Heart right ventricle (tissue), 16 donors: ENCODE measurements at regions of chr14 and their contacts with region 1.

Region 1: DNA sequence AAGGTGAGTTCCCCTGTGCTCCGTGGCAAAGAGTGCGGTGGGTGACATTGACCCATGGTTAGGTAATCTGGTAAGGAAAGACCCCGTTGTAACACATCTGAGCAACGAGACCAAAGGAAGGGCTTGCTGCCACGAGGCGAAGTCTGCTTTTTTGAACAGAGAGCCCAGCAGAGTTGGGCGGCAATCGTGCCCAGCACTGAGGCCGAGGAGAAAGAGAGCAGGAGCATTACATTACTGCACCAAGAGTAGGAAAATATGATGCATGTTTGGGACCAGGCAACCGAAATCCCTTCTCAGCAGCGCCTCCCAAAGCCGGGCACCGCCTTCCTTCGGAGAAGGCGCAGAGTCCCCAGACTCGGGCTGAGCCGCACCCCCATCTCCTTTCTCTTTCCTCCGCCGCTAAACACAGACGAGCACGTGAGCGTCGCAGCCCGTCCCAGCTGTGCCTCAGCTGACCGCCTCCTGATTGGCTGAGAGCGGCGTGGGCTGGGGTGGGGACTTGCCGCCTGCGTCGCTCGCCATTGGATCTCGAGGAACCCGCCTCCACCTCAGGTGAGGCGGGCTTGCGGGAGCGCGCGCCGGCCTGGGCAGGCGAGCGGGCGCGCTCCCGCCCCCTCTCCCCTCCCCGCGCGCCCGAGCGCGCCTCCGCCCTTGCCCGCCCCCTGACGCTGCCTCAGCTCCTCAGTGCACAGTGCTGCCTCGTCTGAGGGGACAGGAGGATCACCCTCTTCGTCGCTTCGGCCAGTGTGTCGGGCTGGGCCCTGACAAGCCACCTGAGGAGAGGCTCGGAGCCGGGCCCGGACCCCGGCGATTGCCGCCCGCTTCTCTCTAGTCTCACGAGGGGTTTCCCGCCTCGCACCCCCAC is at the start of gene HIF1A:
- DNase-seq: peak; percentile 96 to 97
- ATAC-seq: peak; percentile 97 to 99 (median 98)
- H3K4me3 ChIP-seq: peak within 1 kb of the TSS; percentile 70 to 99 (median 88)
- H3K27ac ChIP-seq: peak within 1 kb of the TSS; percentile 72 to 100 (median 96)
- H3K4me1 ChIP-seq: peaks cover 0 to 43% (median 33%) of the 10 kb centered on the region in 9 donors
- H3K27me3 ChIP-seq: no peaks in the 10 kb centered on the region
- CTCF ChIP-seq: peak in 3 of 9 donors; percentile 16 to 24 (median 19)
- total RNA-seq, gene HIF1A: 52.8 to 97.3 (median 62.9) TPM

Region 2: GRCh38 chr14:61525293-61526011 is 169.6 kb before region 1 on chr14:
- intact Hi-C with region 1: loop called in 1 of 10 experiments (anchors 10 kb)
- DNase-seq: peak; percentile 45 to 52
- ATAC-seq: peak; percentile 64 to 91 (median 77)
- H3K4me3 ChIP-seq: no peak overlapping the region
- H3K27ac ChIP-seq: peak overlapping the region; percentile 48 to 92 (median 79)
- H3K4me1 ChIP-seq: peaks cover 15 to 70% (median 52%) of the 10 kb centered on the region in 9 donors
- H3K27me3 ChIP-seq: no peaks in the 10 kb centered on the region
- CTCF ChIP-seq: no peak

Region 3: DNA sequence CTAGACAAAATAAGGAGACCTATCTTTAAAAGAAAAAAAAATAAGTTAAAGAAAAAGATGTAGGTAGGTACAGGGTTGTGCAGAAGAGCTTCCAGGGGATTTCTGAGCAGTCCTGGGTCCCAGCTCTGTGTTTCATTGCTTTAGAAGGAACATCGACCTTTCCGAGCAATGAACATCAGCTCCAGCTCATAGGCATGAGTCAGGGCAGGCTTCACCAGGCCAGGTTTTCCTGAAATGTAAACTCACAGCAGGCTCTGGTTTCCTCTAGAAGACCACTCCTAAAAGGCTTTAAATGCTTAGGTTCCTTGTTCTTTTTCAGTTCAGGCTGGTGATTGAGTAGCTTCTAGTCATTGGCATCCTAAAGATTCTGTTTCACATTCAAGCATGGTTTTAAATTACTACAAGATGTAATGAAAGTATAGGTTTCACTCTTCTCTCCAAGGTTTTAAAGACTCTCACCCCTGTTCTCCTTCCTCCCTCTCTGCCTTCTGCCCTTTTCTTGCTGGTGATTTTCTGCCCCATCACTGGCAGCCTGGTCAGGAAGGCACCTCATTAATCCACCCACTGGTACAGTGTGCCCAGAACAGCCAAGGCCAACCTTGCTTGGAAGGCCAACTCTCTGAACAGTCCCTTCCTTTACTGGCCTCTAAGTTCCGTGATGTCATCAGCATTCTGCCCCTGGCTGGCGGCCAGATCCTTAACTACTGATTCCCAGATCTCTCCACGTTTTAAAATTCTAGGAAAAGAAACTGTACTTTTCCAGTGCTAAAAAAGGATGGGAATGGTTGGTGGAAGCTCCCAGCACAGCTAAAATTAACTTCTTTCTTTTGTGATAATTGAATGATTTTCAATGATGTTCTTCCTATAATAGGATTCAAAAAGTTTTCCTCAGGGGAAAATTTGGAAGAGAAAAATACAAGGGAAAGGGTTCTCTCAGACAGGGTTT is 109.2 kb before region 1 on chr14:
- intact Hi-C with region 1: loop called in 2 of 10 experiments (anchors 5 to 10 kb)
- DNase-seq: peak; percentile 76 to 85
- ATAC-seq: peak; percentile 68 to 92 (median 84)
- H3K4me3 ChIP-seq: no peak overlapping the region
- H3K27ac ChIP-seq: peak overlapping the region; percentile 17 to 86 (median 61)
- H3K4me1 ChIP-seq: peaks cover 6 to 79% (median 42%) of the 10 kb centered on the region in 9 donors
- H3K27me3 ChIP-seq: no peaks in the 10 kb centered on the region
- CTCF ChIP-seq: no peak

Region 4: DNA sequence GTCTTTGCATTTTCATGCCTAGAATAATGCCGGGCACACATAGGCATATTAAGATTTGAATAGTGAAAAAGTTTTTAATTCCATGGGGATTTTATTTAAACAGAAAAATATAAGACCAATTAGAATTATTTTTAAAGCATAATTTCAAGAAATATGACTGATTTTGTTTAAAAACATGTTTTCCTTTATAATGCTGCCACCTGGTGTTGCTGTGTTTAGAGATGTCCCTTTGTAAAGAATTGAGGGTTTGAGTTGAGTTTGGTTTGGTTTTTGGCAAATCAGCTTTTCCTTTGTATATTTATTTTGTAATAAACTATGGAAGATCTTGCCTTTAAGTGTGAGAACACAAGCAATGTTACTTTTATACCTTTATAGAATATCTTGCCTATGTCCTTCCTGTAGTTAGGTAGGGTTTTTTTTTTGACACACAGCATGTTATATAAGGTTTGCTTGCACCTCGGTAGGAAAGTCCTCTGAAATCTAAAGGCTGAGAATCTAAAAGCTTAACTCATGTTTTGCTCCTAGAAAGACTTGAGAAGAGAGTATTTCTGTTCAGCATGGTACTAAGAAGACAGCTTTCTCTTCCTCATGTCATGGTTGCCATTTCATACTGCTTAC is 35.8 kb after region 1 on chr14:
- intact Hi-C with region 1: loop called in 1 of 10 experiments (anchors 5 kb)
- DNase-seq: no peak
- ATAC-seq: peak in 3 of 8 donors; percentile 21 to 39 (median 29)
- H3K4me3 ChIP-seq: no peak overlapping the region
- H3K27ac ChIP-seq: peak overlapping the region in 4 of 10 donors; percentile 37 to 48 (median 40)
- H3K4me1 ChIP-seq: peaks cover 0 to 31% (median 9%) of the 10 kb centered on the region in 9 donors
- H3K27me3 ChIP-seq: no peaks in the 10 kb centered on the region
- CTCF ChIP-seq: peak in 8 of 9 donors; percentile 17 to 73 (median 60)

Region 5: DNA sequence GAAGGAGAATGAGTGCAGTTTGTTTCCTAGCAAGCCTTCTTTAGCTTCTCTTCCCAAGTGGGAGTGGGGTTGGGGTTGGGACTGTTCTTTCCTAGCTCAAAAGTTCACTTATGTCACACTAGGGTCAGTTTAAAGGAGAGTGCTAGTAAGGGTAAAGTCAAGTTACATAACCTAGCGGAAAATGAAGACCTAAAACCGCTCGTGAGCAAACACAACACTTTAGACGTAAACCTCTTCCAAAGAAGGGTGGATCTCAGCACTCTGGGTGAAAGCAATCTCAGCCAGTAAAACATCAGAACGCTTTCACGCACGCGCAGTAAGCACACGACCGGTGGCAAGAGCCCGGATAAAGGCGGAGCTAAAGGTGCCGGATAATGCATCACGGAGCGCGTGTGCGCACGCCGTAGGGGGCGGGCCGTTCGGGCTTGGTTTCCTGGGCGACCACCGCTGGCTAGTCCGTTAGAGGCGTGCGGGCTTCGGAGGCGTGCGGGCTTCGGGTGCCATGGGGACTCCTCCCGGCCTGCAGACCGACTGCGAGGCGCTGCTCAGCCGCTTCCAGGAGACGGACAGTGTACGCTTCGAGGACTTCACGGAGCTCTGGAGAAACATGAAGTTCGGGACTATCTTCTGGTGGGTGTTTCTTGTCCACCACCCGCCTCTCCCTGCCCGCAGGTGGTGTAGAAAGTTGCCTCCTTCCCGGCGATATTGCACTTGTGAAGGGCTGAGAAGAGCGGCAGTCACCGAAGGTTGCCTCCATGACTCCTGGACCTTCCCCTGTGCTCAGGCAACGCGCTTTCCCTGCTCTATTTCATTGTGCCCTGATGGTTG is 67.1 kb after region 1 on chr14 and contains the start of gene SNAPC1:
- intact Hi-C with region 1: loop called in 1 of 10 experiments (anchors 5 kb)
- DNase-seq: peak; percentile 97
- ATAC-seq: peak; percentile 98 to 100 (median 99)
- H3K4me3 ChIP-seq: peak within 1 kb of the TSS; percentile 21 to 95 (median 84)
- H3K27ac ChIP-seq: peak within 1 kb of the TSS; percentile 44 to 98 (median 90)
- H3K4me1 ChIP-seq: peaks cover 0 to 46% (median 29%) of the 10 kb centered on the region in 9 donors
- H3K27me3 ChIP-seq: no peaks in the 10 kb centered on the region
- CTCF ChIP-seq: no peak
- total RNA-seq, gene SNAPC1: 5.6 to 11.9 (median 7.4) TPM